ENCODE measurements at regions of chr15 and their contacts with region 1.

Region 1: GRCh38 chr15:37995461-37996347 is 61.3 kb downstream of the TMCO5A start:
- DNase-seq: peak in 1 of 2 experiments; percentile 28
- H3K4me3 ChIP-seq: no peak overlapping the region
- H3K27ac ChIP-seq: no peak overlapping the region
- H3K4me1 ChIP-seq: no peaks in the 10 kb centered on the region
- H3K27me3 ChIP-seq: no peaks in the 10 kb centered on the region
- CTCF ChIP-seq: peak; percentile 74

Region 2: DNA sequence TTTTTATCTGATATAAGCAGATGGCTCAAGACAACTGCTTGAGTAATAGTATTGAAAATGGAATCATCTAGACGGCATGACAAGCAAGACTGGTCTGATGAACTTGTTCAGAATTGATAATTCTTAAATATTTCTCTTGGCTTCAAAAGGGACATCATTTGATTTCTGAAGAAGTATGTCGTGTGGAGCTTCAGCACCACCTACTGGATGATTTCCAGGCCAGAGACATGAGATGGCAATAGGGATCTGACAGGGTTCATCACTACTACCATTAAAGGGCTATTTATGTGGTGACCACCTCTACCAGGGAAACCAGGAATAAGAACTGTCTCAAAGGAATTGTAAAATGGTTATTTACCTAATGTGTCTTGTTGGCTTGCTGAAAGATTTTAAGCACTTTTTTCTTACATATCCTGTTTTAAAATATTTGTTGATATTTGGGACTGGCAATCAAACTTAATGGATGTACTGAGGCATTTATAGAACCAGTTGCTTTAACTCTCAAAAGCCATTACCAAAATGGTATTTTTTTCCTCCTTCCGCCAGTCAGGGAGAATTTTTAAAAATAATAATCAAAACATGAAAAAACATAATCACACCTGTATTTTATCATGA is 358.7 kb after region 1 on chr15:
- CTCF ChIA-PET with region 1: interaction called, 3 read pairs
- POLR2A ChIA-PET with region 1: no interaction called
- intact Hi-C with region 1: loop called (anchors 1 kb)
- DNase-seq: peak; percentile 41 to 51
- H3K4me3 ChIP-seq: no peak overlapping the region
- H3K27ac ChIP-seq: no peak overlapping the region
- H3K4me1 ChIP-seq: no peaks in the 10 kb centered on the region
- H3K27me3 ChIP-seq: no peaks in the 10 kb centered on the region
- CTCF ChIP-seq: peak; percentile 74

Region 3: DNA sequence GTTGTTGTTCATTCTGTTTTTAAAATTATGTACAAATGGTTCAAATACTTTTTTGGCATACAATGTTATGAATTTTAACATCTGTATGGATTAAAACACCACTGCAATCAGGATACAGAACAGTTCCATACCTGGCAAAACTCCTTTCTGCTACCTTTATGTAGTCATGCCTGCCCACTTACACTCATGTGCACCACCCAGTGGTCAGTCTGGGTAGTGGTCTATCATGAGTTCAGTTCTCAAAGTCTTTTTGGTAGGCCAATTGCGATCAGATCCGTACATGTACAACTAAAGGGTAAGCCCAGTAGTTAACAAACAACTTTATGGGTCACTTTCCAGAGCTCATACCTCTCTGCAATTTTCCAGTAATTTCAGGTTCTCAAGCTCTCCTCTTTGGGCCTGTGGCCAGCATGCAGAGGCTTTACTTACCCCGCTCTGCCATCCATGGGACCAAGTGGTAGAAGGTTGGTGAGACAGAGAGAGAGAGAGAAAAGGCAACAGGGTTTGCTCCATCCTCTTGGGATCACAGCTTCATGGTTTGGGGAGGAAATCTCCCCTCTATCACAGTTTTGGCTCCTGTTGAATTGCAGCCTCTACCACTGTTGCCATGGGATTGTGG is 394.3 kb after region 1 on chr15:
- CTCF ChIA-PET with region 1: no interaction called
- POLR2A ChIA-PET with region 1: no interaction called
- intact Hi-C with region 1: loop called (anchors 2 kb)
- DNase-seq: peak in 1 of 2 experiments; percentile 51
- H3K4me3 ChIP-seq: no peak overlapping the region
- H3K27ac ChIP-seq: no peak overlapping the region
- H3K4me1 ChIP-seq: no peaks in the 10 kb centered on the region
- H3K27me3 ChIP-seq: no peaks in the 10 kb centered on the region
- CTCF ChIP-seq: peak; percentile 77

Region 4: DNA sequence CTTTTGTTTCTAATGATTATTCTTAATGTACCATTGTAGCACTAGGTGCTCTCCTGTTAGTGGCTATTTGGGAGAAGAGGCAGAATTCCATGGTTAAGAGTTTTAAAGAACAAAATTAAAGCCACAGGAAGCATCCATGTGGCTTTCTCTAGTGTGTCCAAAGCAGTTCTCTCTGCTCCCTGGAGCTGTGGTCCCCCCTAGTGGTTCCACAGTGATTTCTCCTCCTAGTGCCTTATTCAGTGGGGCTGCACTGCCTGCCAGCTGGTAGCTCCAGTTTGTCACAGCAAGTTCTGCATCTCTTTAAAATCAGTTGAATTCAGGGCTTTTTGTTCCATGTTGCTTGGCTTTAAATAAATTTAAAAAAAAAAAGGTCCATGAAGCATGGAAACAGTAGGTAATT is 418.7 kb after region 1 on chr15:
- CTCF ChIA-PET with region 1: no interaction called
- POLR2A ChIA-PET with region 1: no interaction called
- intact Hi-C with region 1: loop called (anchors 1 kb)
- DNase-seq: peak in 1 of 2 experiments; percentile 46
- H3K4me3 ChIP-seq: no peak overlapping the region
- H3K27ac ChIP-seq: no peak overlapping the region
- H3K4me1 ChIP-seq: no peaks in the 10 kb centered on the region
- H3K27me3 ChIP-seq: no peaks in the 10 kb centered on the region; the same call in 1 of the 2 replicates
- CTCF ChIP-seq: peak; percentile 61

Region 5: DNA sequence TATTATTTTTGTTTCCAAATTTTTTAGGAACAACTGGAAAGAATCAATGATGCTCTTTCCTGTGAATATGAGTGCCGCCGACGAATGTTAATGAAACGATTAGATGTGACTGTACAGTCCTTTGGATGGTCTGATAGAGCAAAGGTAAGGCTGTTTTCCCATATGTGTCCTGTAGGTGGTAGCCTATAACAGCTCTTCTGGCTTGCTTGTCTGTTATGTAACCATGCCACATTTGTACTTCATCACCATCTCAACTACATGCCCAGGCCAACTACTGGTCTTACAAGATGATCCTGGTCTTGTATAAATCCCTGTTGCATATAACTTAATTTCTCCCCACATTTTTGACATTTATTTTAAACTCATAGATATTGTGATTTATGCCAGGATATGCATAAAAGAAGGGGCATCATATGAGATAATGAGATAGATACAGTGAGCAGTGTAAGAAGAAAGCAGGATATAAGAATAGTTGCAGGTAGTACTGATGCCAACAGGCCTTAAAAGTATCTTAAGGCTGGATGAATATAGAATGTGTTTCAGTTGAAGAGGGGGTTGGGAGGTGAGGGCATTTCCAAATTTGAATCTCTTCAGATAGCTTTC is 478.6 kb after region 1 on chr15:
- CTCF ChIA-PET with region 1: no interaction called
- POLR2A ChIA-PET with region 1: no interaction called
- intact Hi-C with region 1: loop called (anchors 5 kb)
- DNase-seq: peak; percentile 9 to 39
- H3K4me3 ChIP-seq: no peak overlapping the region
- H3K27ac ChIP-seq: no peak overlapping the region
- H3K4me1 ChIP-seq: no peaks in the 10 kb centered on the region
- H3K27me3 ChIP-seq: no peaks in the 10 kb centered on the region
- CTCF ChIP-seq: peak; percentile 73